A549 (cell line): ENCODE measurements at regions of chr6 and their contacts with region 1.

Region 1: GRCh38 chr6:13914351-13914750 is 10.4 kb upstream of the RNF182 start:
- DNase-seq: no peak
- ATAC-seq: no peak
- H3K4me3 ChIP-seq: no peak overlapping the region
- H3K27ac ChIP-seq: 0 out of 6 replicates have a peak overlapping the region, but pooled peaks of 1 of the 2 experiments have one; percentile 8
- H3K4me1 ChIP-seq: peaks cover 6% of the 10 kb centered on the region; the same call in 1 of the 3 replicates
- CTCF ChIP-seq: no peak
- EP300 ChIP-seq: no peak
- POLR2A ChIP-seq: no peak
- RAD21 ChIP-seq: no peak

Region 2: DNA sequence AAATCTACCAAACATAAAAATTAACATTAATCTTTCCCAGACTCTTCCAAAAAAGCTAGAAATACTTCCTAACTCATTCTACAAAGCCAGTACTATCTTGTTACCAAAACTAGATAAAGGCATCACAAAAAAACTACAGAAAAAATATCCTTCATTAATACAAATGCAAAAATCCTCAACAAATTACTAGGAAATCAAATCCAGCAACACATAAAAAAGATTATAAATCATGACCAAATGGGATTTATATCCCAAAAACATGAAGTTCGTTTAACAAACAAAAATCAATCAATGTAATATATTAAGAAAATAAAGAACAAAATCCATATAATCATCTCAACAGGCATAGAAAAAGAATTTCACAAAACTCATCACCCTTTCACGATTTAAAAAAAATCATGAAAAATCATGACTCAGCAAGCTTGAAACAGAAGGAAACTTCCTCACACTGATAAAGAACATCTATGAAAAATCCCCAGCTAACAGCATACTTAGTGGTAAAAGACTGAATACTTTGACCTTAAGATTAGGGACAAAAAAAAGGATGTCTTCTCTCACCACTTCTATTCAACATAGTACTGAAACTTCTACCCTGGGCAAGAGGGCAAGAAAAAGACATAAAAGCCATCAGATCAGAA is 245.9 kb before region 1 on chr6:
- CTCF ChIA-PET with region 1: no interaction called
- POLR2A ChIA-PET with region 1: no interaction called
- DNase-seq: peak in 1 of 2 experiments; percentile 9
- ATAC-seq: no peak
- H3K4me3 ChIP-seq: no peak overlapping the region
- H3K27ac ChIP-seq: no peak overlapping the region
- H3K4me1 ChIP-seq: peaks cover 16% of the 10 kb centered on the region; the same call in 2 of the 3 replicates
- CTCF ChIP-seq: no peak
- EP300 ChIP-seq: no peak
- POLR2A ChIP-seq: no peak
- RAD21 ChIP-seq: no peak

Region 3: GRCh38 chr6:13725570-13725969 is 188.8 kb before region 1 on chr6:
- CTCF ChIA-PET with region 1: no interaction called
- POLR2A ChIA-PET with region 1: no interaction called
- DNase-seq: peak in 1 of 2 experiments; percentile 21
- ATAC-seq: no peak
- H3K4me3 ChIP-seq: no peak overlapping the region
- H3K27ac ChIP-seq: 0 out of 6 replicates have a peak overlapping the region, but pooled peaks of 1 of the 2 experiments have one; percentile 35
- H3K4me1 ChIP-seq: peaks cover 17% of the 10 kb centered on the region; the same call in 2 of the 3 replicates
- CTCF ChIP-seq: no peak
- EP300 ChIP-seq: no peak
- POLR2A ChIP-seq: no peak
- RAD21 ChIP-seq: no peak

Region 4: GRCh38 chr6:14046476-14047068 is 132.2 kb after region 1 on chr6:
- CTCF ChIA-PET with region 1: interaction called, 29 read pairs
- POLR2A ChIA-PET with region 1: no interaction called
- DNase-seq: peak; percentile 54 to 60
- ATAC-seq: peak; percentile 84 to 85; a peak in 5 of 6 replicates
- H3K4me3 ChIP-seq: no peak overlapping the region
- H3K27ac ChIP-seq: no peak overlapping the region
- H3K4me1 ChIP-seq: no peaks in the 10 kb centered on the region
- CTCF ChIP-seq: peak; percentile 54
- EP300 ChIP-seq: no peak
- POLR2A ChIP-seq: no peak
- RAD21 ChIP-seq: peak; percentile 56 to 58

Region 5: DNA sequence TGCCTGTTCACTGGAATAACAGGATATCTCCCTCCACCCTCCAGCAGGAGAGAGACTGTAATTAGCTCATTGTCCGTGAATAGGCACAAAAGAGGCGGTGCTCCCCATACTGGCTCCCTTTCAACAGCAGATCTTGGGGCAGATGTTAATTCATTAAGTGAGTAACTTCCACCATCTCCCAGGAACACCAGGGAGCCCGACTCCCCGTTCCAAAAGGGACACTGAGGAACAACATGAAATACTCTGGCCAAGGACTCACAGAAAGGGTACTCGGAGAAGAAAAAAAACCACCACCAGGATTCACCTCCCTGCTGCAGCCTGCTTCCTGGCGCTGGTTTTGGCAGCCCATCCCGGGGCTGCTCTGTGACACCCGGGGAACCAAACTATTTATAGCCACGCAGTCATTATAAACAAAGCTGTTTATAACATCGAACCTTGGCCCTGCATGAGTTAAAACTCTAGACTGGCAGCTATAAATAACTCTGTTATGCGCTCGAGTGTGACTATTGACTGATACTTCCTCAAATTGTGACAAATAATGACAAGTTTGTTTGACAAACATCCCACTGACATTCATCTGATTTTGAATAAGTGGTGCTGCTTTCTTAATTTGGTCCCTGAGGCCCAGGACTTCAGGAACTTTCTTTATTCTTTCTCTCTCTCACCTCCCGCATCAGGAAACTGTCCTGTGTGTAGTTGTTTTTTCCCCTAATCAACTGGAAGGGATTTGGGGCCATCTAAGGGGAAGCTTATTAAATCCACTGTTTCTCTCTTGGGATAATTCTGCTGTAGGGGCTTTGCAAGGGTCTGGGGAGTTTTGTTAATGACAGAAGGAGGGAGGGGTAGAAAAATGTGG is 724.8 kb after region 1 on chr6:
- CTCF ChIA-PET with region 1: no interaction called
- POLR2A ChIA-PET with region 1: no interaction called
- DNase-seq: no peak
- ATAC-seq: no peak
- H3K4me3 ChIP-seq: no peak overlapping the region
- H3K27ac ChIP-seq: peak overlapping the region in 1 of 2 experiments; percentile 39; a peak in 1 of 6 replicates
- H3K4me1 ChIP-seq: no peaks in the 10 kb centered on the region
- CTCF ChIP-seq: no peak
- EP300 ChIP-seq: no peak
- POLR2A ChIP-seq: no peak
- RAD21 ChIP-seq: no peak